ENCODE measurements at regions of chr4 and their contacts with region 1.

Region 1: GRCh38 chr4:82367438-82368097 is 6.2 kb downstream of the HNRNPD start:
- DNase-seq: no peak
- CTCF ChIP-seq: no peak

Region 2: DNA sequence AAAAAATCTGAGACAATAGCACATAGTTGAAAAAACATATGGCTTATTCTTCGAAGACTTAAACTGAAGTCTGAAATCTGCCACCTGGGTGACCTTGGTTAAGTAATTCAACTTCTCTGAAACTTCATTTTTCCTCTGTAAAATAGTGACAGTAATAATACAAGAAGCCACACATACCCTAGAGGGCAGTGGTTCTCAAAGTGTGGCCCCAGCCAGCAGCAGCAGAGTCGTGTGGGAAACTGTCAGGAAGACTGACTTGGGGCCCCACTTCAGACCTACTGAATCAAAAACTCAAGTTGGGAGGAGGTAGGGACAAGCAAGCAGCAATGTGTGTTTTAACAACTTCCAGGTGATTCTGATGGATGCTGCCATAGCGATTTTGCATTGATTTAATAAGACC is 243.6 kb before region 1 on chr4:
- CTCF ChIA-PET with region 1: no interaction called
- POLR2A ChIA-PET with region 1: no interaction called
- DNase-seq: no peak
- CTCF ChIP-seq: no peak

Region 3: GRCh38 chr4:82354788-82355187 is 12.8 kb before region 1 on chr4:
- CTCF ChIA-PET with region 1: interaction called, 8 read pairs
- POLR2A ChIA-PET with region 1: interaction called, 14 read pairs
- DNase-seq: no peak
- CTCF ChIP-seq: no peak

Region 4: GRCh38 chr4:82379964-82380733 is 12.6 kb after region 1 on chr4:
- CTCF ChIA-PET with region 1: no interaction called
- POLR2A ChIA-PET with region 1: no interaction called
- DNase-seq: no peak
- CTCF ChIP-seq: no peak

Region 5: GRCh38 chr4:82394910-82395309 is 27.3 kb after region 1 on chr4:
- CTCF ChIA-PET with region 1: no interaction called
- POLR2A ChIA-PET with region 1: no interaction called
- DNase-seq: no peak
- CTCF ChIP-seq: no peak

Measured in GM10248 (cell line).